Esophagus squamous epithelium (tissue), 5 donors: ENCODE measurements at regions of chr14 and their contacts with region 1.

Region 1: GRCh38 chr14:69574954-69575295 is 254 bp upstream of the CCDC177 start:
- DNase-seq: no peak
- H3K4me3 ChIP-seq: peak overlapping the region in 2 of 4 donors; percentile 34 to 66
- H3K27ac ChIP-seq: no peak overlapping the region
- H3K4me1 ChIP-seq: peaks cover 24 to 49% (median 30%) of the 10 kb centered on the region in 3 donors
- H3K27me3 ChIP-seq: peaks cover 14 to 86% (median 16%) of the 10 kb centered on the region in 4 donors
- CTCF ChIP-seq: no peak
- POLR2A ChIP-seq: no peak

Region 2: DNA sequence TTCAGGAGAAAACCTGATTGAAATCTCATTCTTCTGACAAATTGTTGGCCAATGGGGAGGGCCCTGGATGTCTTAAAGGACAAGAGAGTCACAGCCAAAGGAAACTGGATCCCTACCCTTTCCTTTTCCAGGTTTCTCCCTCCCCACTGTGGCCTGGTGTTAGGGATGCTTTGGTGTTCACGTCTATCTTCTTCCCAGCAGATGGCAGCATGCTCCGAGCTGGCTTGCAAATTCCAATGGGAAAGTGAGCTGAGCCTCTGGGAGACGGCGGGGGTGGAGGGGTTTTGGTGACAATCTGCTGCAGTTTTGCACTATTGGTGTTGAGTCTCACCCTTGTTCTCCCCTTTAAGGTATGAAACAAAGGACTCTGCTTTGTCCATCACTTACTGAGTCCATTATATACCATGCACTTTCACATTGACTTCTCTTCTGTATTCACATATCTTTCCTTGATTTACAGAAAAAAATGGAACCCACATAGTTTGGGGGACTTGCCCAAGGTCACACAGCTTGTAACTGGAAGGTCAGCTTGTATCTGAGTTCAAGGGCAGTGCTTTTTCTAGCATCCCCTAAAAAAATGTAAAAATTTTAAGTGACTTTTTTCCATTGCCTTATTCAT is 39.6 kb before region 1 on chr14:
- intact Hi-C with region 1: loop called (anchors 5 kb)
- DNase-seq: no peak
- H3K4me3 ChIP-seq: no peak overlapping the region
- H3K27ac ChIP-seq: no peak overlapping the region
- H3K4me1 ChIP-seq: peaks cover 7 to 51% (median 17%) of the 10 kb centered on the region in 3 donors
- H3K27me3 ChIP-seq: peaks cover 0 to 4% (median 0%) of the 10 kb centered on the region in 4 donors
- CTCF ChIP-seq: peak in 5 of 6 experiments; percentile 37 to 67 (median 41)
- POLR2A ChIP-seq: no peak